ENCODE measurements at regions of chr11 and their contacts with region 1.

Region 1: GRCh38 chr11:114790910-114791309 is 112.6 kb downstream of the NXPE2 start:
- DNase-seq: no peak
- ATAC-seq: no peak
- H3K4me3 ChIP-seq: no peak overlapping the region
- H3K27ac ChIP-seq: no peak overlapping the region
- H3K4me1 ChIP-seq: no peaks in the 10 kb centered on the region
- CTCF ChIP-seq: no peak
- EP300 ChIP-seq: no peak
- POLR2A ChIP-seq: no peak
- RAD21 ChIP-seq: no peak

Region 2: DNA sequence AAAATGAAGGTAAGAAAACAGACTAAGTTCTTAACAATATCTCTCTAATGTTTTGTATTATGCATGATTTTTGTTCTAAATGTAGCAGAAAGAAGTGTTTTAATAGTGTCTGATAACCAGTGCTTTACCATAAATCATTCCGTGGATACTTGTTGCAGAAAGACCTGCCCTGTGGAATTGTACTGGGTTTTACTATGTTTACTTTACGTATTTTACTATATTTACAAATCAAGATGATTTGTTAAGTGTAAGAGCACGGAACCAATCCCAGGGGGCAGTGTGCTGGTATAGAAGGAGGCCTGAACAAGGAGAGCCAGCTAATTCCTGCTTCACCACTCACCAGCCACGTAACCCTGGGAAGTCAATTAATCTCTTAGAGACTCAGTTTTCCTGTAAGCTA is 884.9 kb before region 1 on chr11:
- CTCF ChIA-PET with region 1: no interaction called
- POLR2A ChIA-PET with region 1: no interaction called
- DNase-seq: peak; percentile 10 to 54
- ATAC-seq: peak; percentile 62 to 72; a peak in 4 of 6 replicates
- H3K4me3 ChIP-seq: no peak overlapping the region
- H3K27ac ChIP-seq: no peak overlapping the region
- H3K4me1 ChIP-seq: peaks cover 8% of the 10 kb centered on the region; the same call in 2 of the 3 replicates
- CTCF ChIP-seq: 0 out of 3 replicates have a peak, but pooled peaks have one; percentile 14
- EP300 ChIP-seq: no peak
- POLR2A ChIP-seq: no peak
- RAD21 ChIP-seq: no peak

Region 3: GRCh38 chr11:114774599-114775361 is 16.1 kb before region 1 on chr11:
- CTCF ChIA-PET with region 1: interaction called, 10 read pairs
- POLR2A ChIA-PET with region 1: no interaction called
- DNase-seq: peak; percentile 7 to 55
- ATAC-seq: peak; percentile 56 to 91; a peak in 3 of 6 replicates
- H3K4me3 ChIP-seq: no peak overlapping the region
- H3K27ac ChIP-seq: no peak overlapping the region
- H3K4me1 ChIP-seq: no peaks in the 10 kb centered on the region
- CTCF ChIP-seq: peak; percentile 45
- EP300 ChIP-seq: no peak
- POLR2A ChIP-seq: no peak
- RAD21 ChIP-seq: peak; percentile 61 to 76

Region 4: DNA sequence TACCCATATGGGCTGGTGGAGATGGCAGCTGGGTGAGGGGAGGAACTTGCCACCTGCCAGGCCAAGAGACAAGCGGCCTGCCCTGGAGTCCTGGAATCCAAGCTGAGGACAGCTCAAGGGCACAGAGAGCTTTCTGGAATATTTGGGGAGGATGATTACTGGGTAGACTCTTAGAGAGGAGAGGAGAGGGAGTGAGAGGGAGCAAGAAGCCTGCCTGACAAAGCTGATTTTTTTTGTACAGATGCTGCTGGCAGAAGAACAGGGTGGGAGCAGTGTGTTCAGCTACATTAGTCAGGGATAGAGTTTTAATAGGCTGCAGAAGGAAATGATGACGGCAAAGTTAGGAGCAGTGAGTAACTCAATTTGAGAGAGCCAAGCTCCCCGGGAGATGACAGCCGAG is 186.7 kb after region 1 on chr11:
- CTCF ChIA-PET with region 1: no interaction called
- POLR2A ChIA-PET with region 1: no interaction called
- DNase-seq: no peak
- ATAC-seq: no peak
- H3K4me3 ChIP-seq: no peak overlapping the region
- H3K27ac ChIP-seq: no peak overlapping the region
- H3K4me1 ChIP-seq: no peaks in the 10 kb centered on the region
- CTCF ChIP-seq: no peak
- EP300 ChIP-seq: no peak
- POLR2A ChIP-seq: no peak
- RAD21 ChIP-seq: no peak

Measured in A549 (cell line).